Mammary epithelial cell (primary cell): ENCODE measurements at regions of chr20 and their contacts with region 1.

Region 1: DNA sequence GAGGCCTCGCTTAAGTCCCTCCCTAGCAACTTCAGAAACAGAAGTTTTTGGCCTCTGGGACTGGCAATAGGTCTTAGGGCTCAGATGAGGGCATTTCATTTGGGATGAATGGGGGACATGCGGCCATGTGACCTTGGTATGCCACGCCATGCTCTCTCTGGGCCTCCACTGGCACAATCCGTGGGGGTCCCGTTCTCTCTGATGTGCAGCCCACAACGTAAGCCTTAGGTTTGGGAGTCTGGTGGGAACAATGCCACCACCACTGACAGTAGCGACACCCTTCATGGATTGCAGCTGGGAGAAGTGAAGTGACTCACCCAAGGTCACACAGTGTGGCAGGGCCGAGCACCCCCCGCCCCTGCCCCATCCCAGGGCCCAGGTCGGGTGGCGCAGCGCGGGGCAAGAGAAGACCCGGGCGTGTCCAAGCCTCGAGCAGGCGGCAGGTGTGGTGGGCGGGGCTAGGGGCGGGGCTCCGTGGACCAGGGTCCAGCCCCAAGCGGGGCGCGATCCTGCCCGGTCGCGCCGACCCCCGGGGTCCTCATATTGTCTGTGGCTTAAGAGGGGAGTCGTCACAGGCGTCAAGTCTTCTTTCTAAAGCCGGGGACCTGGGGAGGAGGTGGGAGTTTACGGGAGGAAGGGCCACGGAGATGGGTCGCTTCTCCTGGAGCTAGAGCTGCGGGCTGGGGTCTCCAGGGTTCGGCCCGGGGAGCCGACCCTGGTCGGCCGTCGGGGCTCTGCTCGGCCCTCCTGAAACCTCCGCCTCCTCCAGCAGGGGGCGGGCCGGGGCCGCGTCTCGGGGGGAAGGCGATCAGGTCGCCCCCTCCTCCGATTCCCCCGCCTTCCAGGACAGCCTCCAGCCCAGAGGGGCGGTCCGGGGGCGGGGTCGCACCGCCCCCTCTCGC is 698 bp upstream of the CEBPB start:
- DNase-seq: peak; percentile 69
- H3K4me3 ChIP-seq: peak overlapping the region in 2 of 3 experiments; percentile 89 to 99
- H3K27ac ChIP-seq: peak overlapping the region; percentile 68
- H3K4me1 ChIP-seq: peaks cover 18% of the 10 kb centered on the region
- H3K27me3 ChIP-seq: no peaks in the 10 kb centered on the region
- CTCF ChIP-seq: peak; percentile 25 to 70

Region 2: DNA sequence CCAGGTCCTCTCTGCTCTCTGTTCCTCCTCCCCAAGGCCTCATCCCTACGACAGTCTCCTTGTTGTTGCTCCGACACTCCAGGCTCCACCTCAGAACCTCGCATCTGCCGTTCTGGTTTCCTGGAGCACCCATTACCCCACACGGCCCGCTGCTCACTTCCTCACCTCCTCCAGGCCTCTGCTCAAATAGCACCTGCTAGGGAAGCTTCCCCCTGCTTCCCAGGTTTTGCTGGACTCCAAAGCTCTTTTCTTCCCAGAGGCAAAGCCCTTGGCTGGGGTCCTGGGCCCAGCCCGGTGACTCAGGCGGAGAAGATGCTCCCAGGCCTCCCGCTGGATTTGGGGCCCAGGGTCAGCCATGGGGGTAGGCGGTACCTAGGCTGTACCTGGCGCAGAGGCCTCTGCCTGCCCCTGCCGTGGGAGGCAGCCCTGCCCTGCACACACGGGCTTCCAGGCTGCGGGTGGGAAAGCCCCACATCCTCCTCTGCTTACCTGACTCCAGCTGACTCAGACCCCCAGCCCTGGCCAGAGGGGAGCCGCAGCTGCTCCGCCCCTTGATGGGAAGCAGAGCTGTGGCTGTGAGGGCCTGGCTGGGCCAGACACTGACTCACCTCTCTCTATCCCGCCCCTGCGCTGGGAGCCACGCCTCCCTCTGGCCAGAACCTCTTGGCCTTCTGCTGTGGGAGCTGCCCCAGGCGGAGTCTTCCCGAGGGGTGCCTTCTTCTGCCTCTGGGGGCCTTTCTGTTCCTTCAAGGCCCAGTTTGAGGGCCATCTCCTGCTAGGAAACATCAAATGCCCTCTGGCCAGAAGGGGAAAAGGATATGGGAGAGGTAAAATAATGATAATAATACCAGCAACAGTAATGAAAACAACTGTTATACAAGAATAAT is 131.2 kb after region 1 on chr20:
- CTCF ChIA-PET with region 1: no interaction called
- dilution Hi-C with region 1: no loop called
- in situ Hi-C with region 1: no loop called
- intact Hi-C with region 1: loop called (anchors 5 kb)
- DNase-seq: peak; percentile 99
- H3K4me3 ChIP-seq: peak overlapping the region; percentile 15 to 49 (median 49)
- H3K27ac ChIP-seq: peak overlapping the region; percentile 90
- H3K4me1 ChIP-seq: peaks cover 48% of the 10 kb centered on the region
- H3K27me3 ChIP-seq: no peaks in the 10 kb centered on the region
- CTCF ChIP-seq: peak in 1 of 2 donors; percentile 11

Region 3: DNA sequence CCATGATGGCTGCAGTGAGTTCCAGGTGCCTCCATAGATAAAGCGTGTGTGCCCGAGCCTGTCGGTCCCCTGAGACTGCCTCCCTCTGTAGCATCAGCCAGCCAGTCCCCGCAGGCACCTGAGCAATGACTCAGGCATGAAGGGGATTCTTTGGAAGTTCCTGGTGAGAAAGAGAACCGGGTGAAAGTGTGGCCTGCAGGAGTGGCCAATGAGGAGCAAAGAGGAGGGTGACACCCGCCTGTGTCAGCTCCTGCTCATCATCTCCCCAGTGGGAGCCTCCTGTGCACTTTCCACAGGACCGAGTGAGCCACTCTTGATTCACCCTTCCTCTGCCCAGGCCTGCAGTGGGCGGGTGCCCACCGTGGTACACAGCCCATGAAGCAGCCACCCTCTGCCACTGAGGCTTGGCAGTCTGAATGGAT is 249.1 kb after region 1 on chr20:
- CTCF ChIA-PET with region 1: no interaction called
- dilution Hi-C with region 1: no loop called
- in situ Hi-C with region 1: no loop called
- intact Hi-C with region 1: loop called (anchors 1 kb)
- DNase-seq: peak; percentile 100
- H3K4me3 ChIP-seq: no peak overlapping the region
- H3K27ac ChIP-seq: peak overlapping the region; percentile 89
- H3K4me1 ChIP-seq: peaks cover 38% of the 10 kb centered on the region
- H3K27me3 ChIP-seq: no peaks in the 10 kb centered on the region
- CTCF ChIP-seq: no peak

Region 4: GRCh38 chr20:50575847-50576720 is 386.2 kb after region 1 on chr20:
- CTCF ChIA-PET with region 1: no interaction called
- dilution Hi-C with region 1: no loop called
- in situ Hi-C with region 1: loop called in 1 of 2 experiments (anchors 10 kb)
- intact Hi-C with region 1: loop called (anchors 1 kb)
- DNase-seq: no peak
- H3K4me3 ChIP-seq: no peak overlapping the region
- H3K27ac ChIP-seq: no peak overlapping the region
- H3K4me1 ChIP-seq: no peaks in the 10 kb centered on the region
- H3K27me3 ChIP-seq: no peaks in the 10 kb centered on the region
- CTCF ChIP-seq: peak; percentile 57 to 75

Region 5: DNA sequence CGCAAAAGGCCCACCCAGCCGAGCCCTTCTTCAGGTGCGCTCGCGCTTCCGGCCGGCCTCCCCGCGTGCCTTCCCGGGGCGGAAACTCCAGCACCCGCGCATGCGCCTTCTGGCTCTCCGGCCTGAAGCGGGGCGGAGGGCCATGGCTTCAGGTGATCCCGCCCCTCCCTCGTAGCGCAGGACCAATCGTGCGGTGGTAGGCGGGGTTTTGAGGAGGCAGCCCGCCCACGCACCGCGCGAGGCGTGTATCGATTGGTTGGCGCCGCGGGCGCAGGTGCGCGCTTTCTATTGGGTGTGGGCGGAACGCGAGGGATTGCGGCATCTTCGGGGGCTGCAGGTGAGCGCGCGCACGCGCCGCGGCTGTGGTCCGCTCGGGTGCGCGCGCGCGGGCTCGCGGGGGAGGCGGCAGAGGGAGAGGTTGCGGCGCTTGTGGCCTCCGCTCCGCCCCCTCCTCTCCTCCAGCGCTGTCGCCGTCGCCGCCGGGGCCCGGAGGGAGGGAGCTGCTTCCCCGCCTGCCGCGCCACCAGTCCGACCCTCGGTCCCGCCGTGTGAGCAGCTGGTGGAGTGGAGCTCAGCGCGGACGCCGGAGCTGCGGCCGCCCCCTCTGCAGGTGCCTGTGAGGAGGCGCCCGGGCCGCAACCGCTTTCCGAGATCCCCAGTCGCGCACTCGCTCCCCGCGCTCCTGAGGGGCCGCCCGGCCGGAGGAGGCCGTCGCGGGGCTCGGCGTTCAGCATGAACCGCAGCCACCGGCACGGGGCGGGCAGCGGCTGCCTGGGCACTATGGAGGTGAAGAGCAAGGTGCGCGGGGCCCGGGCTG is 541.3 kb after region 1 on chr20 and contains the start of gene PARD6B:
- CTCF ChIA-PET with region 1: no interaction called
- dilution Hi-C with region 1: no loop called
- in situ Hi-C with region 1: loop called in 1 of 2 experiments (anchors 25 kb)
- intact Hi-C with region 1: no loop called
- DNase-seq: peak; percentile 100
- H3K4me3 ChIP-seq: peak within 1 kb of the TSS; percentile 60 to 88 (median 78)
- H3K27ac ChIP-seq: peak within 1 kb of the TSS; percentile 88
- H3K4me1 ChIP-seq: peaks cover 53% of the 10 kb centered on the region
- H3K27me3 ChIP-seq: no peaks in the 10 kb centered on the region
- CTCF ChIP-seq: no peak
- total RNA-seq, gene PARD6B: 5.6 to 7.7 TPM